ENCODE measurements at regions of chr17 and their contacts with region 1.

Region 1: DNA sequence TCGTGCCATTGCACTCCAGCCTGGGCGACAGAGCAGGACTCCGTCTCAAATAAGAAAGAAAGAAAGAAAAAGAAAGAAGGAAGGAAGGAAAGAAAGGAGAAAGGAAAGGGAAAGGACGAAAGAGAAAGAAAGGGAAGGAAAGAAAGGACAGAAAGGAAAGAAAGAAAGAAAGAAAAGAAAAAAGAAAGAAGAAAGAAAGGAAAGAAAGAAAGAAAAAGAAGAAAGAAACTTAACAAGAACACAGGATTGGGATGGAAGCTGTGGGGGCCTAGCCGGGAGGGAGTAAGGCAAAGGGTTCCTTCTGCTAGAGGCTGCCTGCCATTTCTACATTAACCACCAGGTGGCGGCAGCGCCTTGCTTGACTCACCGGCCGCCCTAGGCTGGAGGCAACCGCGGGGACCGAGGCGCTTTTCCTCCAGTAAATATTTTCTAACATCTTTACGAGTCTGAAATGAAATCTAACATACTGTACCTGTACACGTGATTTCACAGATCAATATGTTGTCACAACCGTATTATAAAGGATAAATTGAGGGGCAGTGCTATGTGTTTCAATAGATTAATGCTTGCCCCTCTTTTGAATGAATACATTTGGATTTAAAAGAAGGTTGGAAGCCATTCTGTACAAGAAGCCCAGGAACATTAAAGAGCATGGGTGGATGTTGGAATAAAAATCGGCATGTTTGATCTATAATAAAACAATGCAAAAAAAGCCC is 6.1 kb downstream of the GJD3 start:
- DNase-seq: peak; percentile 93 to 95
- H3K4me3 ChIP-seq: no peak overlapping the region
- H3K27ac ChIP-seq: peak overlapping the region in 1 of 2 donors; percentile 27
- H3K4me1 ChIP-seq: peaks cover 0 to 25% (median 13%) of the 10 kb centered on the region in 4 donors
- H3K27me3 ChIP-seq: peaks cover 0 to 10% of the 10 kb centered on the region in 2 donors
- CTCF ChIP-seq: peak; percentile 98 to 99

Region 2: DNA sequence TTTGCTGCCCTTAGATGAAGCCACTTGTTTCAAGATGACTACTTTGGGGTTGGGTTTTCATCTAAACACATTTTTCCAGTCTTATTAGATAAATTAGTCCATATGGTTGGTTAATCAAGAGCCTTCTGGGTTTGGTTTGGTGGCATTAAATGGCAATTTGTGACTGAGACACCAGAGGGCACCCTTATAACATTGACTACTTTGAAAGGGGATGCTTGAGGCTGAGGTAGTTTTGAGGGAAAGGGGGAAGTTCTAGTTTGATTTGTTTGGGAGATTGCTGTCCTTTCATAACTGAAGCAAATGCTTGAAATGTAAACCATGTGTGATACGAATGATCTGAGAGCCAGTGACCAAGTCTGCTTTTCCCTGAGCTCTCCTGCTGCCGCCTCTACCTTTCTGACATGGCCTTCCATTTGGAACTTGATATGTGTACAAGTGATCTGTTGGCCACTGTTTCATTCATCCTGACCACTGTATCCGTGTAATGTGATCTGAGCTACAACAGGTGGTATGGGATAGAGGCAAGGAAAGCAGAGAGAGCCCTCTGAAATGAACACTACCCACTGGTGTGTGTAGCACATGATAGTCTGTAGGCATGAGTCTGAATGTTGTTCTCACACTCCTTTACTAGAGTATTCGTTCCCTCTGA is 55.3 kb before region 1 on chr17:
- intact Hi-C with region 1: loop called (anchors 1 kb)
- DNase-seq: peak in 1 of 2 donors; percentile 65
- H3K4me3 ChIP-seq: no peak overlapping the region
- H3K27ac ChIP-seq: no peak overlapping the region
- H3K4me1 ChIP-seq: peaks cover 0 to 32% (median 18%) of the 10 kb centered on the region in 4 donors
- H3K27me3 ChIP-seq: no peaks in the 10 kb centered on the region
- CTCF ChIP-seq: peak; percentile 75 to 88

Region 3: DNA sequence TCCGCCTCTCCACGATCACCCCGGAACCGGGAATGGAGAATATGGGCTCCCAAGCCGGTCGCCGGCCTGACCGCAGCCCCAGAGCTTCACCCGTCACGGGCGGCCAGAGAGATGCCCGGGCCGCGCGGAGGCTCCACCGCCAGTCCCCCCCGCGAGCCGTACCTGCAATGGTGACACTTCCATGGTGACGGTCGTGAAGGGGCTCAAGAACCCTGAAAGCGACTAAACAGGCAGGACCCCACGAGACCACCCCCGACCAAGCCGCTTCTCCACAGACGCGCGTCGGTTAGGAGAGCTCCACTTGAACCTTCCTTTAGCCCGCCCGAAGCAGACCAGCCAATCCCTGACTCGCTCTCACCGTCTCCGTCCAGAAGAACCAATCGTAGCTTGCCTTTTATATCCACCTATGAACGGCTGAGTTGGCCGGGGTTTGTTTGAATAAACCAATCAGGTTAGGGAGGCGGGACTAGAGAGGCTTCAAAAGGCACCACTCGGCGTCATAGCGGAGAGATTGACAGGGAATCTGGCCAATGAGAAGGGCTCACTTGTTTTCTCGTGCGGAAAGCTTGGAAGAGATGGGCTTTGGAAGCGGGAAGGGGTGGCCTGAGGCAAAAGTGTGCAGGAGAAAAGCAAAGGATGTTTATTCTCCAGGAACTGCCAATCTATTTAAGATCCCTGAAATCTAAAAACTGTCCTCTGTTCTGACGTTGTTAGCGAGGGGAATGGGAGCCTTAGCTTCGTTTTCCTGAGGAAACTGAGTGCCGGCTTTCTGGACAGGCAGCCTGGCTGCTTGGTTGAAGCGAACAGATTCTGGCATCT is 59.3 kb after region 1 on chr17 and contains the start of gene TOP2A:
- intact Hi-C with region 1: loop called (anchors 5 kb)
- DNase-seq: peak; percentile 98 to 99
- H3K4me3 ChIP-seq: peak within 1 kb of the TSS; percentile 52 to 63
- H3K27ac ChIP-seq: peak within 1 kb of the TSS; percentile 59 to 70
- H3K4me1 ChIP-seq: peaks cover 0 to 13% (median 11%) of the 10 kb centered on the region in 4 donors
- H3K27me3 ChIP-seq: peaks cover 0 to 5% of the 10 kb centered on the region in 2 donors
- CTCF ChIP-seq: peak in 1 of 2 experiments; percentile 24

Region 4: DNA sequence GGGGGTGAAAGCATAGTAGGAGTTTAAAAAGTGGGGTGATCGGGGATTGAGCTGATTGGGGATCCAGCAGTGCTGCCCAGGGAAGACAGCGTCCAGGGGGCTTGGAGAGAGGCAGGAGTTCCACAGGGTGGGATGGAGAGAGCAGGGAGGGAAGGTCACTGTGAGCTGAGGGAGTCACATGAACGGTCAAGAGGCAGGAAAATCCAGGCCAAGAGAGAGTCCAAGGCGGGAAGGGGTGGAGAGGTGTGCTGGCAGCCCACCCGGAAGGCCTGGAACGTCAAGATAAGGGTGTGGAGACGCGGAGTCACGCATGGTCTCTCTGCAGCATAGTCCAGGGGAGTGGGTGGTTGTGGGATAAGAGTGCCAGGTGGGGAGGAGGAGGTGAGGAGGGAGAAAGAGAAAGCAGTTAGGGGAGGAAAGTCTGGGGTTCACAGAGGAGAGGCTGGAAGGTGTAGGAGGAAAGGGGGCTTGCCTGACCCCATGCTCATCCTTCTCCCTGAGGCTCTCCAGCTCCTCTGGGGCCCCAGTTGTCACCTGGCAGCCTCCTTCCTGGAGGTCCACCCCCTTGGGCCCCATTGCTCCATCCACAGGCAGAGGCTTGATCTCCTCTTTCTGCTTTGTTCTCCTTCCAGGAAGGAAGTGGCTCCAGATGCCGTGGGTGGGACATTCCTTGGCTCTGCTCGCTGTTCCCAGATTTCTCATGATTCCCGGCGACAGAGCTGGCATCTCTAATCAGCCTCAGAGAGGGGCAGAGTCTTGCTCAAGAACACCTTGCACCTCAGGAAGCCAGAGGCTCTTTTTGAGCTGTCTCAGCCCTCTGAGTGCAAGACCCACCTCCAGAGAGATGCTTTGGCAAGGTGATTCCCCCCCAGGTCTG is 178.1 kb after region 1 on chr17:
- intact Hi-C with region 1: loop called (anchors 10 kb)
- DNase-seq: peak; percentile 57 to 79
- H3K4me3 ChIP-seq: no peak overlapping the region
- H3K27ac ChIP-seq: peak overlapping the region; percentile 88 to 91
- H3K4me1 ChIP-seq: peaks cover 4 to 66% (median 57%) of the 10 kb centered on the region in 4 donors
- H3K27me3 ChIP-seq: no peaks in the 10 kb centered on the region
- CTCF ChIP-seq: no peak

Measured in tibial artery (tissue), 4 donors.